Dendritic cell treated with granulocyte-macrophage colony-stimulating factor and Interleukin-4, amounts not matched to agents 40 ng/mL and 50 ng/mL, for 4 days (primary cell): ENCODE measurements at regions of chr17 and their contacts with region 1.

Region 1: DNA sequence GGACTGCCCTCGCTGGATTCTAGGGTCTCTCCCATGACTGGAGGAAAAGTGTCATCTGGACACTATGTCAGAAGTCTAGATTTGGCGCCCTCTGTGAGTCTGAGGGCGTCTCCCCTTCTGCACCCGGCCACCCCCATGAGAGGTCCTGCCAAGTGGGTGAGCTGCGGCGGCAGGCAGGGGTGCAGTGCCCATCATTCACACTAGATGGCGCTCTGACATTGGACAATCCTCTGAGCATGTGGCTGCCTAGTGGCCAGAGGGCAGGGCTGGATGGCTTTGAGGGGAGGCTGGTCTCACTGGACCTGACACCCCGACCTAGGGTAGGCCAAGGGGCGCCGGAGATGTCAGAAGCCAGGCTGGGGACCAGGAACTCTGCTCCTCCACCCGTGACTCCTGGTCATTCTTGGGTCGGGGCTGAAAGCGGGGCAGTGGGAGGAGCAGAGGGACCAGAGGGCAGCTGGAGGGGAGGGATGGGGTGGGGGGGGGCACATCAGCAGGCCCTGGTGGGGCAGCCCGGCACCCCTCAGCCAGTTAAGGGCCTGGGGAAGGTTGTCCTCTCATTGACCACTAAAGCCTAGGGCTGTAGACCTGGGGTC is 28.0 kb downstream of the MRM1 start:
- H3K4me3 Mint-ChIP-seq: no peak overlapping the region
- H3K27ac Mint-ChIP-seq: no peak overlapping the region
- H3K4me1 Mint-ChIP-seq: peaks cover 6% of the 10 kb centered on the region
- H3K27me3 Mint-ChIP-seq: peaks cover 9% of the 10 kb centered on the region

Region 2: GRCh38 chr17:36608794-36609497 is 20.4 kb before region 1 on chr17:
- intact Hi-C with region 1: no loop called
- H3K4me3 Mint-ChIP-seq: peak overlapping the region; percentile 23
- H3K27ac Mint-ChIP-seq: no peak overlapping the region
- H3K4me1 Mint-ChIP-seq: peaks cover 40% of the 10 kb centered on the region
- H3K27me3 Mint-ChIP-seq: peaks cover 2% of the 10 kb centered on the region

Region 3: DNA sequence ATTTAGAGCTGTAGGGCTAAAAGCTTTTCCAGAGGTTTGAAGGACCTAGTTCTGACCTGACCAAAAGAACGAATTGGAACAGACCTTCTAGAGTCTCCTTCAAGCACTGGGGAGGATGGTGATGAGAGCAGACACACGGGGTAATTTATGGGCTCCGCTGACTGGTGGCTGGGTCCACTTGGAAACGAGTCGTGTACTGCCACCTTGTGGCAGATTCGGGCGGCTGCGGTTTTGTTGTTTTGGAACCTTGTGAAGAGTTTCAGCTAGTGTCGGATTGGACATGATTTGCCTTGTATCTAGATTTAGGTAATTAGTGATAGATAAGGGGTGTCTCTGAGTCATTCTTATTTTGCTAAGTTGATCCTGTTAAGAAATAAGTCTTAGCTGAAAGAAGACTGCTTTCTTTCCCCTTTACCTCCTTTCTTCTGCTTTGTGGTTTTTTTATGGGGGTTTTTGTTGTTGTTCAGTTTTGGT is 418.3 kb after region 1 on chr17:
- intact Hi-C with region 1: loop called (anchors 1 kb)
- H3K4me3 Mint-ChIP-seq: no peak overlapping the region
- H3K27ac Mint-ChIP-seq: no peak overlapping the region
- H3K4me1 Mint-ChIP-seq: peaks cover 6% of the 10 kb centered on the region
- H3K27me3 Mint-ChIP-seq: no peaks in the 10 kb centered on the region

Region 4: DNA sequence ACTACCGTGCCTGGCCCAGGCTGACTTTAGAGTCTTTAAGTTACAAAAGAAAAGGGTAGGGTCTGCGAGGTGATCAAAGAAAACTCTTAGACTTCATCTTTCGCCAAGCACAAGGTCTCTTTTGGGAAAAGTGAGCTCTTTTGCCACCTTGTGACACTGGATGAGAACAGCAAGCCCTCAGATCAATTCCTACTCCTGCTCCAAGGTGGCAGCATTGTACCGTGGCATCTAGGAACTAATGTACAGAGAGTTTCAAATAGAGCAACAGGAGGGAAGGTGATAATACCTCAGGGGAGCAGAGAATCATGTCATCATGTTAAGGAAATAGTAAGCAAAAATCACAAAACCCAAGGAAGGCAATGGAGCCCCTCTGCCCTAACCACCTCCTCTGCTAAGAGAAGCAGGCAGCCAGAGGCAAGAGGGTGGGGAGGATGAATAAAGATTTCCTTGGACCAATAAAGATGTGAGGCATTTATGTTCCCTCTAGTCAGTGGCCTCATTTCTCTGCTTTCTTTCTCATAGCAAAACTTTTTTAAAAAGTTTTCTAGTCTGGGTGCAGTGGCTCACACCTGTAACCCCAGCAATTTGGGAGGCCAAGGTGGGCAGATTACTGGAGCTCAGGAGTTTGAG is 744.3 kb after region 1 on chr17:
- intact Hi-C with region 1: loop called (anchors 10 kb)
- H3K4me3 Mint-ChIP-seq: no peak overlapping the region
- H3K27ac Mint-ChIP-seq: no peak overlapping the region
- H3K4me1 Mint-ChIP-seq: no peaks in the 10 kb centered on the region
- H3K27me3 Mint-ChIP-seq: no peaks in the 10 kb centered on the region